ENCODE measurements at regions of chr13 and their contacts with region 1.

Region 1: GRCh38 chr13:112790735-112791641 is 101.2 kb downstream of the ATP11A start:
- DNase-seq: no peak
- H3K4me3 ChIP-seq: no peak overlapping the region
- H3K27ac ChIP-seq: no peak overlapping the region
- H3K4me1 ChIP-seq: no peaks in the 10 kb centered on the region
- H3K27me3 ChIP-seq: no peaks in the 10 kb centered on the region
- CTCF ChIP-seq: no peak

Region 2: DNA sequence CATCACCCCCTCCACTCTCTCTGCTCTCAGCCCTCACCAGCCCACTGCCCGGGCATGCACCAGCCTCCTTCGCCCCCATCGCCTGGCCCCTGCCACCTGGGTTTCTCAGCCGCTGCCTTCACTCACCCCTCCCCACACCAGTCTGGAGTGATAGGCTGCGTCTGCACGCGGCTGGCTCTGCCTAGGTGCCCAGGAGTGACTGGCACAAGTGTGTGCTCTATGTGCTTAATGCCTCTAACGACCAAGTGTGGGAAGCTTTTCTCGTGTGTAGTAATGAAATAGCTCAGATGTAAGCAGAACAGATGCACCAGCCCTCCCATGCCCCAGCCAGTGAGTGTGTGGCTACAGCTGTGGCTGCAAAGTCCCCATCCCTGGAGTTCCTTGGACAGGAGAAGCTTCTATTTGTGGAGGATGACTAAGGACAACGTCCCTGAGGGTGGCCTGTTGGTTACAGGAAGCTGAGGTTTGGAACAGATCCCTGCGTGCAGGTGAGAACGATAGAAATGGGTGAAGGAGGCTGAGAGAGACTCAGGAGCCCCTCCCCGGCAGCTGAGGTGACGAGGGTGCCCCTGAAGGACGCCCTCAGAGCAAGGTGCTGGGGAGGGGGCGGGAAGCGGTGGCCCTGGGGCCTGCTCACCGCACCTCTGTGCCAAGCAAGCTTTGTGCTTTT is 65.5 kb before region 1 on chr13:
- CTCF ChIA-PET with region 1: no interaction called
- dilution Hi-C with region 1: loop called (anchors 5 kb)
- in situ Hi-C with region 1: no loop called
- intact Hi-C with region 1: no loop called
- DNase-seq: peak; percentile 58
- H3K4me3 ChIP-seq: no peak overlapping the region
- H3K27ac ChIP-seq: no peak overlapping the region
- H3K4me1 ChIP-seq: peaks cover 17% of the 10 kb centered on the region
- H3K27me3 ChIP-seq: no peaks in the 10 kb centered on the region
- CTCF ChIP-seq: no peak